HepG2 (cell line): ENCODE measurements at regions of chr2 and their contacts with region 1.

Region 1: DNA sequence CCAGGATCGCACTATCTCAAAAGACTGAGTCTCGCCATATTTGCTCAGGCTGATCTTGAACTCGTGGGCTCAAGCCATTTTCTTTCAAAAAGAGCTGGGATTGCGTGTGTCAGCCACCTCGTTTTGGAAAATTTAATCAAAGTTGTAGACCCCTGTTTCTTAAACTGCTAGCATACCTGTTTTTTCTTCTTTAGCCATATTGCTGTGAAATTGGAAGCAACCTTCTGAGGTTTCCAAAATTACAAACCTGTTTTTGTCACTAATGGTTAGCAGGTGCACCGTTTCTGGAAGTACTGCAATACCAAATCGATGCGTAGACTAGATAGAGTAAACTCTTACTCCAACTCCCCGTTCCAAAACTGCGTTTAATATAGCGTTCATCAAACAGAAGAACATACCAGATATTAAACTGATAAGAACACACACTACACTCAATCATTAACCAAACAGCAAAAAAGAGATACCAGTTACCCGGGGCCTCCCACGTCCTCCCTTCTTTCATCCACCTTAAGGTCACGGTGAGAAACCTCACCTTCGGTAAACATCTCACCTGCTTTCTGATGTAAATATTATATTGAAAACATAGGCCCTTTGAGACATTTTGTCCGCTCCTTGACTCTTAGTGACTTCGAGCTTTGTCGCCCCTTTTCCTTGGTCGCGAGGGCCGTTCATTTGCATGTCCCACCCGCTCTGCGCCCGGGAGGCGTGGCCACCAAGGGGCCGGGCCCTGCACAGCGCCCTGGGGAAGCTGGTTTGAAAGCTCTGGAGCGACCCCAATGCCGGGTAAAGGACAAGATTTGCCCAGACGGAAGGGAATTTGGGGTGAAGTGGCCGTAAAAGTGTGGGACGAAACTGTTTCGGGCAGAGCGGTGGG is at the start of gene RNU2-63P:
- DNase-seq: peak; percentile 96
- ATAC-seq: peak; percentile 91
- H3K4me3 ChIP-seq: peak within 1 kb of the TSS; percentile 77 to 91 (median 77)
- H3K27ac ChIP-seq: peak within 1 kb of the TSS; percentile 96
- H3K4me1 ChIP-seq: peaks cover 37% of the 10 kb centered on the region
- H3K27me3 ChIP-seq: no peaks in the 10 kb centered on the region; a peak in 1 of 5 replicates
- CTCF ChIP-seq: peak; percentile 18; the same call in 1 of the 2 replicates
- EP300 ChIP-seq: peak; percentile 22 to 69; a peak in 3 of 4 replicates
- POLR2A ChIP-seq: peak; percentile 97 to 100
- RAD21 ChIP-seq: peak; percentile 62
- total RNA-seq, gene RNU2-63P: 6.8 TPM in 1 of 2 replicates, not detected in the other

Region 2: DNA sequence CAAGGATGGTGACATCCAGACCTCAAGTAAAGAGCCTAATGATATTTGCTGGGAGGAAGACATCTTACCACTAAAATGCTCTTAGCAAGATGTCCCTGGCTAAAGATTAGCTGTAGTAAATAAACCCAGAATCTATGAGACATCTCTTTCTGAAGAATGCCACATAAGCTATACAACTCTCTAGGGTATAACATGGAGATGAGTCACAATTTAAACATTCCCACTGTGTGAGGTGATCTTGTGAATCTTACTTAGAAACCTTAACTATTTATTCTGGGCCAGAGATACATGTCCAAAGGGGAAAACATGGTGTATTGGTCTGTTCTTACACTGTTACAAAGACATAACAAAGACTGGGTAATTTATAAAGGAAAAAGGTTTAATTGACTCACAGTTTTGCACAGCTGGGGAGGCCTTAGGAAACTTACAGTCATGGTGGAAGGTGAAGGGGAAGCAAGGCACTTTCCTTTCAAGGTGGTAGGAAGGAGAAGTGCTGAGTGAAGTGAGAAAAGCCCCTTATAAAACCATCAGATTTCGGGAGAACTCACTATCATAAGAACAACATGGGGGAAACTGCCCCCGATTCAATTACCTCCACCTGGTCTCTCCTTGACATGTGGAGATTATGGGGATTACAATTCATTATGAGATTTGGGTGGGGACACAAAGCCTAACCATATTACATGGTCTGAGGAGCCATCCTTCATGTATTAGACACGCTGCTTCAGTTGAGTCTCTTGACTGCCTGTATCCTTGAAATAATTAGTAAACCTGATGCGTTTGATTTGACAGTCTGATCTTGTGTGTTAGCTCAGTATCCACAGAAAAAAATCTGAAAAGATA is 22.2 kb after region 1 on chr2:
- CTCF ChIA-PET with region 1: no interaction called
- POLR2A ChIA-PET with region 1: interaction called, 15 read pairs
- in situ Hi-C with region 1: no loop called
- intact Hi-C with region 1: no loop called
- DNase-seq: peak; percentile 74
- ATAC-seq: peak; percentile 83
- H3K4me3 ChIP-seq: no peak overlapping the region
- H3K27ac ChIP-seq: no peak overlapping the region
- H3K4me1 ChIP-seq: peaks cover 17% of the 10 kb centered on the region
- H3K27me3 ChIP-seq: no peaks in the 10 kb centered on the region
- CTCF ChIP-seq: no peak
- EP300 ChIP-seq: peak in 1 of 2 experiments; percentile 62; a peak in 2 of 4 replicates
- POLR2A ChIP-seq: no peak
- RAD21 ChIP-seq: no peak

Region 3: GRCh38 chr2:88131201-88131998 is 115.1 kb after region 1 on chr2:
- CTCF ChIA-PET with region 1: no interaction called
- POLR2A ChIA-PET with region 1: interaction called, 19 read pairs
- in situ Hi-C with region 1: no loop called
- intact Hi-C with region 1: loop called (anchors 5 kb)
- DNase-seq: peak; percentile 75
- ATAC-seq: peak; percentile 22
- H3K4me3 ChIP-seq: peak overlapping the region in 1 of 3 experiments; percentile 18; a peak in 1 of 6 replicates
- H3K27ac ChIP-seq: peak overlapping the region; percentile 75
- H3K4me1 ChIP-seq: peaks cover 89% of the 10 kb centered on the region
- H3K27me3 ChIP-seq: no peaks in the 10 kb centered on the region; a peak in 1 of 5 replicates
- CTCF ChIP-seq: no peak
- EP300 ChIP-seq: peak in 1 of 2 experiments; percentile 95; a peak in 2 of 4 replicates
- POLR2A ChIP-seq: no peak
- RAD21 ChIP-seq: no peak

Region 4: GRCh38 chr2:88136817-88137216 is 120.5 kb after region 1 on chr2:
- CTCF ChIA-PET with region 1: no interaction called
- POLR2A ChIA-PET with region 1: interaction called, 20 read pairs
- in situ Hi-C with region 1: no loop called
- intact Hi-C with region 1: no loop called
- DNase-seq: peak; percentile 83
- ATAC-seq: peak; percentile 32
- H3K4me3 ChIP-seq: no peak overlapping the region
- H3K27ac ChIP-seq: peak overlapping the region; percentile 89
- H3K4me1 ChIP-seq: peaks cover 92% of the 10 kb centered on the region
- H3K27me3 ChIP-seq: no peaks in the 10 kb centered on the region
- CTCF ChIP-seq: no peak
- EP300 ChIP-seq: peak in 1 of 2 experiments; percentile 76; a peak in 2 of 4 replicates
- POLR2A ChIP-seq: no peak
- RAD21 ChIP-seq: no peak

Region 5: GRCh38 chr2:88159955-88160415 is 143.7 kb after region 1 on chr2:
- CTCF ChIA-PET with region 1: no interaction called
- POLR2A ChIA-PET with region 1: interaction called, 15 read pairs
- in situ Hi-C with region 1: no loop called
- intact Hi-C with region 1: loop called (anchors 1 kb)
- DNase-seq: peak; percentile 82
- ATAC-seq: peak; percentile 85
- H3K4me3 ChIP-seq: peak overlapping the region in 1 of 3 experiments; percentile 35; a peak in 1 of 6 replicates
- H3K27ac ChIP-seq: no peak overlapping the region
- H3K4me1 ChIP-seq: peaks cover 40% of the 10 kb centered on the region
- H3K27me3 ChIP-seq: 0 out of 5 replicates have a peak, but pooled peaks cover 0 to 11% of the 10 kb centered on the region in 2 experiments
- CTCF ChIP-seq: peak; percentile 97
- EP300 ChIP-seq: no peak
- POLR2A ChIP-seq: no peak
- RAD21 ChIP-seq: peak; percentile 97